Upper lobe of right lung (tissue), 1 donor: ENCODE measurements at regions of chr15 and their contacts with region 1.

Region 1: GRCh38 chr15:85044251-85044853 is 62.7 kb downstream of the PDE8A start:
- DNase-seq: no peak
- ATAC-seq: peak; percentile 91
- H3K4me3 ChIP-seq: no peak overlapping the region
- H3K27ac ChIP-seq: no peak overlapping the region
- H3K4me1 ChIP-seq: peaks cover 21% of the 10 kb centered on the region
- H3K27me3 ChIP-seq: no peaks in the 10 kb centered on the region
- CTCF ChIP-seq: peak; percentile 64

Region 2: DNA sequence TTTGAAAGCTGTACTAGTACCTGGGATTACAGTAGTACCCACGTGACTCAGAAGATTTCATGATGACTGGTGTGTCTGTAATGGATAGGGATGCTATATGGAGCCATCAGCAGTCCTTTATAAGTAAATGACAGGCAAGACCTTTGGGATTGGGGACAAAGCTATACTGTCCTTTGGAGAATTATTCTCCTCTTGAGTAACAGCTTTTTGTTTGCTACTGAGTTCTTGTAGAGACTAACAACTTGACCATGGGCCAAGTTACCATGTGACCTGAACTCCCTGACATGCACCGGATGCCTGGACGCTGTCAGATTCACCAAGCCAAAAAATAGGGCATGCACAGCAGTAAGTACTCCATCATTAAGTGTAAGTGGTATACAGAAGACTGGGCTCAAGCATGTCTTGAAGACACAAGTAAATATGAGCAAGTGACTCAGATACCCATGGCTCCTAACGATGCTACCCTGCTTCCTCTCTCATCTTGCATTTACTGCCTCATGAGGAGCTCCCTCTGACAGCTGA is 341.3 kb before region 1 on chr15:
- intact Hi-C with region 1: no loop called
- DNase-seq: no peak
- ATAC-seq: peak; percentile 83
- H3K4me3 ChIP-seq: no peak overlapping the region
- H3K27ac ChIP-seq: no peak overlapping the region
- H3K4me1 ChIP-seq: peaks cover 11% of the 10 kb centered on the region
- H3K27me3 ChIP-seq: no peaks in the 10 kb centered on the region
- CTCF ChIP-seq: no peak

Region 3: DNA sequence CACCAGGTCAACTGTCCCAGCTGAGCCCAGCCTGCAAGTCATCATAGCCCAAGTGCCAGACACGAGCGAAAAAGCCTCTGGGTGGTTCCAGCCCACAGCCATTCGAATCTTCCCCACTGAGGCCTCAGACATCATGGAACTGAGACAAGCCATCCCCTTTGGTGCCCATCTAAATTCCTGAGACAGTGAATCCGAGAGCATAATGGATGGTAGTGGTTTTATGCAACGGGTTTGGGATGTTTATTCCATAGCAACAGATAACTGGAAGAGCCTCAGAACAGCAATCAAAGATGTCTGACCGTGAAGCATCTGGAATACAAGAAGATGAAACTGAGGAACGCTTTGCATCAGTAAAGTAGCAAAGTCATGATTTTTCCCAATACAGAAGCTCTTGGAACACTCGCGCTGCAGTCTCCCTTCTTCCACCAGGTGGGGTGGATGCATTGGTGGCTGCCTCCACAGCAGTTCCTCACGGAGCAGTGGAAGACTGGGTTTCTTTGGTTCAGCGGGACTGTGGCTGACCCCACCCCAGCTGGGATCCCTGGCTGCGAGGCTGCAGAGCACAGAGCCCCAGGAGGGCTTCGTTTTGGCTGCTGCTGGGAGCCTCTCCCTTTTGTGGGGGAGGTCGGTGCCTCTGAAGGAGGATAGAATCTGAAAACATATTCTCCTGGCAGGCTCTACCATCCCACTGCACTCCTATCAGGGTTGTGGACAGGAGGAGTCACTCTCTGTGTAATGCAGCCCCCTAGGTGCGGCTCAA is 89.1 kb before region 1 on chr15:
- intact Hi-C with region 1: loop called (anchors 2 kb)
- DNase-seq: peak; percentile 84
- ATAC-seq: peak; percentile 97
- H3K4me3 ChIP-seq: peak overlapping the region; percentile 33
- H3K27ac ChIP-seq: no peak overlapping the region
- H3K4me1 ChIP-seq: peaks cover 11% of the 10 kb centered on the region
- H3K27me3 ChIP-seq: no peaks in the 10 kb centered on the region
- CTCF ChIP-seq: peak; percentile 91

Region 4: DNA sequence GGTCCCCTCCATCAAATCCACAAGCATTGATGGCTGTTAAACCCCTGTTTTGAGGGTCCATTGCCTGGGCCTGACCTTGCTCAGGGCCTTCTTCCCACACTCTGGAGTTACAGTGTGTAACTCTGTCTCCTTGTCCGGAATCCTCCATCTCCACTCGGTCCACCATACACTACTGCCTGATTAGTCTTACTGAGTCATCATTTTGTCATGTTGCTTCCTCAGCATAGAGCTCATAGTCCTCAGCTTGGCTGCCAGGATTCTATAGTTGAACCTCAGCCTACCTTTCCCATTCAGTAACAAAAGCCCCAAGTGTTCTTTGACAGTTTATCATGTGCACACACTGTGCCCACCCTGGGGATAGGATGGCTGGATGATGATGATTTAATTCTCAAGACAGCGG is 50.3 kb after region 1 on chr15:
- intact Hi-C with region 1: no loop called
- DNase-seq: no peak
- ATAC-seq: no peak
- H3K4me3 ChIP-seq: no peak overlapping the region
- H3K27ac ChIP-seq: no peak overlapping the region
- H3K4me1 ChIP-seq: no peaks in the 10 kb centered on the region
- H3K27me3 ChIP-seq: no peaks in the 10 kb centered on the region
- CTCF ChIP-seq: no peak